Esophagus squamous epithelium (tissue), 5 donors: ENCODE measurements at regions of chr12 and their contacts with region 1.

Region 1: DNA sequence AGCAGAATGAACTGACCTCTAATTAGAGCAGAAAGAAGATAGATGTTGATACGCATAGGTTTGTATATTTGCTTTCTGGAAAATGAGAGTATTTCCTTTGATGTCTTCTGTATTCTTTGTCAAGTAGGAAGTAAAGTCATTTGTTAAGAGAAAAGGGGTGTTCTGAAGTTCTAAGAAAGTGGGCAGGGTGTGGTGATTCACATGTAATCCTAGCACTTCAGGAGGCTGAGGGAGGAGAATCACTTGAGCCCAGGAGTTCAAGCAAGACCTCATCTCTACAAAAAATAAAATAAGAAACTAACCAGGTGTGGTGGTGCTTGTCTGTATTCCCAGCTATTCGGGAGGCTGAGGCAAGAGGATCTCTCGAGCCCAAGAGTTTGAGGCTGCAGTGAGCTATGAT is 2.8 kb downstream of the RHNO1 start:
- DNase-seq: no peak
- H3K4me3 ChIP-seq: no peak overlapping the region
- H3K27ac ChIP-seq: no peak overlapping the region
- H3K4me1 ChIP-seq: peaks cover 22 to 40% (median 25%) of the 10 kb centered on the region in 3 donors
- H3K27me3 ChIP-seq: no peaks in the 10 kb centered on the region
- CTCF ChIP-seq: no peak
- POLR2A ChIP-seq: no peak

Region 2: GRCh38 chr12:2944401-2945047 is 64.7 kb after region 1 on chr12:
- intact Hi-C with region 1: loop called (anchors 10 kb)
- DNase-seq: no peak
- H3K4me3 ChIP-seq: peak overlapping the region in 3 of 4 donors; percentile 3 to 44 (median 21)
- H3K27ac ChIP-seq: no peak overlapping the region
- H3K4me1 ChIP-seq: peaks cover 0 to 13% (median 0%) of the 10 kb centered on the region in 3 donors
- H3K27me3 ChIP-seq: no peaks in the 10 kb centered on the region
- CTCF ChIP-seq: peak; percentile 34 to 88 (median 76)
- POLR2A ChIP-seq: no peak